Sciatic nerve (tissue), 2 donors: ENCODE measurements at regions of chr2 and their contacts with region 1.

Region 1: DNA sequence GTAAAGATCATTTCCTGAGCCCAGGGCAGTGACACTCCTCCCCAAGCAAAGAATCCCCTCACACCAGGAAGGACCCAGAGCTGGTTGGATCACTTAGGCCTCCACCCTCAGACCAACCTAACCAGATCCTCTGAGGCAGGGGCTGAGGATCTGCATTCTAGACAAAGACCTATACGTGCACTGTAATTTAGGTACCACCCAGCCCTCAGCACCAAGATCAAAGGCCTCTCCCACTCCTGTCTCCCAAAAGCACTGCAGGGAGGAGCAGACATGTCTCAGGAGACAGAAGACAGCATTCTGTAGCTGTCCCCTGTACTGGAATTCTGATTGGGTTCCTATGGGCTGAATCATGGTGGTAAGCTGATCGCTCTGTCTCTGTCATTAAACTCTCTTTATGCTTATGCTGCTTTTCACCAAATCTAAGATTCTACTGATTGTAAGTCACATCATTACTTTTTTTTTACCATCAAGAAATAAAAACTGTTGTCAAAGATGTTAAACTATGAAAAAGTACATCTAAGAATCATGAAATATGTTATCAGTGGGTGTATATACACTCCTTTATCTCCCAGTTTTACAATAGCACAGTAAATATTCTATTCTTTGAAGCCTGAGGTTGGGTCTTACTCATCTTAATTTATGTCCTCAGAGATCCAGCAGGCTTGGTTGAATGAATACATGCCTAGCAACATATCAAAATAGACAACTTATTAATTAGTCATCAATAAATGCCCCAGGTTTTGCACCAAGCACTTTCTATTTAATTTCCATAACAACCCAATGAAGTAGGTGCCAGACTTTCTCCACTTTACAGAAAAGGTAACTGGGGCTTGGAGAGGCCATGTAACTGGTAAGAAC is 28.3 kb downstream of the MCFD2 start:
- DNase-seq: peak; percentile 15
- ATAC-seq: no peak

Region 2: DNA sequence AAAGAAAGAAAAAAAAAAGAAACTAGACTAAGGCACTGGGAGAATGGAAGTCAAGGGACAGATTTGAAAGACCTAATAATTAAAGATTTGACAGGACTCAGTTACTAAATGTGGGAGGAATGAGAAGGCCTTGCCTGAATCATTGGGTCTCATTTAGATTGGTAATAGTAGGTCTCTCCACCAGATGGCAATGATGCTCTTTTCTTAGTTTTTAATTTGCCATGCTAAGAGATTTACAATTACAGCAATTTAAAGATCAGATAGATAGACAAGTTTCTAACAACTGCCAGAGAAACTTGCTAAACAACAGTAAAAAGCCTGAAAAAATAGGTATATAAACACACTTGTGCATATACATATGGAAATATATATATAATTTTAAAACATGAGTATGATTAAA is 254.9 kb before region 1 on chr2:
- intact Hi-C with region 1: loop called (anchors 5 kb)
- DNase-seq: no peak
- ATAC-seq: no peak

Region 3: DNA sequence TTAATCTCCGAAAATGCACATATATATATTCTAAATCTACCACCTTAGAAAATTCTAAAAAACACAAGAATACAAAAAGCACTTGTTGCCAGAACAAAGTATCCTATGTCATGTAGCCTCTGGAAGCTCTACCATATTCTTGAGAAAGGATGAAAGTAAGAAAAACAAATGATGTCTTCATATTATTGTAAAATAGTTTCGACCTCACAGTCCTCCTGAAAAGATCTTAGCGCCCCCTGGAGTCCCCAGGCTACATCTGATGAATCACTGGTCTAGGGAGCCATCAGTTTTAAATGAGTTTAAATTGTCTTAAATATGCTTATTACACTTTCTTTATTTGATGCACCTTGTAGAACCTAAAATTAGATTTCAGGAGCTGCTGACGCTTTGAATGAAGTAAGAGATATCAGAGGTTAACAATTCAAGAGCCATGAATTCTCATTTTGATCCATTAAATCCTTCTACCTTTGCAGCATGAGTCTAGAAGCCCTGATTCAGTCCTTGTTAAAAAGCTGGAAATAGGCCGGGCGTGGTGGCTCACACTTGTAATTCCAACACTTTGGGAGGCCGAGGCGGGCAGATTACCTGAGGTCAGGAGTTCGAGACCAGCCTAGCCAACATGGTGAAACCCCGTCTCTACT is 110.5 kb before region 1 on chr2:
- intact Hi-C with region 1: no loop called
- DNase-seq: peak; percentile 73
- ATAC-seq: peak; percentile 60

Region 4: DNA sequence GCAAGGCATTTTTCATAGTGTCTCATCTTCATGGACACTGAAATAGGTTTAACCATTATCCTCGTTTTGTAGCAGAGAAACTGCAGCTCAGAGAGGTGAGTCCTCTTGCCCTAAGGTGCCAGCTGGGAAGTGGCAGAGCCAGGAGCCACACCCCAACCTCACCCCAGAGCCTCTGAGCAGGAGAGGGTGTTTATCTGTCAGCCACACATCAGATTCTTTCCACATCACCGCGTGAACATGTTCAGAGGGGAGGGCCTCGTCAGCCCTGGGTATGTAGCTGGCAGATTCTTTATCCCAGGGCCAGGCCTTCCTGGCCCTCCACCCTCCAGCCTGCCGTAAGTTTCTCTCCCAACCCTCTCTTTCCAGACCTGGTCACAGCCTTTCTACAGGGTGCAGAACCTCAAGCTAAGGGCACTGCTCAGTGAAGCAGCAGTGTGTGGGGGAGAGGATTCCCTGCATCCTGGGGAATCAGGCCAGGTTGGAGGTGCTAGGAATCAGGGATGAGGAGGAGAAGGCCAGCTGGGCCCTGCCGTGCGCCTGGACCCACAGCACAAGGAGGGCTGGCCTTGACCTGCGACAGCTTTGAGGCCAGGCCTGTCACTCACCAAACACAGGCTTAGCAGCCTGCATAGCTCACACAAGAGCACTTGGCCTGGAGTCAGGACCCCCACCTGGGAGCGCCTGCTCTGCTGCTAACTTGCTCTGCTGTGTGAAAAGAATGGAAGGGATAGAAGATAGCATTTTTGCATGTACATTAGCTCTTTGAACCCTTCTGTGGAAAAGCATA is 139.7 kb after region 1 on chr2:
- intact Hi-C with region 1: no loop called
- DNase-seq: no peak
- ATAC-seq: no peak